PC-3 (cell line): ENCODE measurements at regions of chrX and their contacts with region 1.

Region 1: DNA sequence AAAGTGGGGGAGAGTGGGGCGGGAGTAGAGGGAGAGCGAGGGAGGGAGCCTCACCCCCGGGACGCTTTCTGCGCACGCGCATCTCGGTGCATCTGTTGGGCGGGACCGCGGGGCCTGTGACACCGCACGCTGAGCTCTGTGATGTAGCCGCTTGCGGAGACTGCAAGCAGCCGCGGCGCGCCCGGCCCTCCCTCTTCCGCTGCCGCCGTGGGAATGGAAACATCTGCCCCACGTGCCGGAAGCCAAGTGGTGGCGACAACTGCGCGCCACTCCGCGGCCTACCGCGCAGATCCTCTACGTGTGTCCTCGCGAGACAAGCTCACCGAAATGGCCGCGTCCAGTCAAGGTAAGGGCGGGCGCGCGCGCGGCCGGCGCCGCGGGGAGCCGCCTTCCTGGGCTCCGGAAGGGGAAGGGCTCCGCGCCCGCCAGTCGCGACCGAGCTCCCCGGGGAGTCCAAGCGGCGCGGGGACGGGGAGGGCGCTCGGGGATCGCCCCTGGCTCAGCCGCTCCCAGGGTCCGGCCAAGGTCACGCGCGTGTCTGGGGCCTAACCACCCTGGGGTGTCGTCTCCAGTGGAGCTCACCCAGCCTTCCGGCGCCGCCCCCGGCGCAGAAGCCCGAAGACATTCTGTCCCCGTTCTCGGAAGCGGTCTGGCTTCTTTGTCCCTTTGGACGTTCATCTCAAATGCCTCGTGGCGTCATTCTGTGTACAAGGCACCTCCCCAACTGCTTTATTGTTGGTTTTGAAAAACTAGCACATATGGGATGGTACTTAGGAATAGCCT is at the start of gene FUNDC2:
- DNase-seq: peak; percentile 92
- ATAC-seq: peak; percentile 77
- H3K4me3 ChIP-seq: peak within 1 kb of the TSS; percentile 77
- H3K27ac ChIP-seq: peak within 1 kb of the TSS; percentile 90
- H3K4me1 ChIP-seq: peaks cover 13% of the 10 kb centered on the region
- H3K27me3 ChIP-seq: no peaks in the 10 kb centered on the region
- CTCF ChIP-seq: no peak
- total RNA-seq, gene FUNDC2: 75.0 and 80.7 TPM in 2 replicates

Region 2: GRCh38 chrX:154986826-154987576 is 39.9 kb before region 1 on chrX:
- CTCF ChIA-PET with region 1: no interaction called
- POLR2A ChIA-PET with region 1: no interaction called
- intact Hi-C with region 1: loop called (anchors 2 kb)
- DNase-seq: peak; percentile 19
- ATAC-seq: no peak
- H3K4me3 ChIP-seq: no peak overlapping the region
- H3K27ac ChIP-seq: no peak overlapping the region
- H3K4me1 ChIP-seq: no peaks in the 10 kb centered on the region
- H3K27me3 ChIP-seq: no peaks in the 10 kb centered on the region
- CTCF ChIP-seq: peak; percentile 36; the same call in 1 of the 2 replicates

Region 3: DNA sequence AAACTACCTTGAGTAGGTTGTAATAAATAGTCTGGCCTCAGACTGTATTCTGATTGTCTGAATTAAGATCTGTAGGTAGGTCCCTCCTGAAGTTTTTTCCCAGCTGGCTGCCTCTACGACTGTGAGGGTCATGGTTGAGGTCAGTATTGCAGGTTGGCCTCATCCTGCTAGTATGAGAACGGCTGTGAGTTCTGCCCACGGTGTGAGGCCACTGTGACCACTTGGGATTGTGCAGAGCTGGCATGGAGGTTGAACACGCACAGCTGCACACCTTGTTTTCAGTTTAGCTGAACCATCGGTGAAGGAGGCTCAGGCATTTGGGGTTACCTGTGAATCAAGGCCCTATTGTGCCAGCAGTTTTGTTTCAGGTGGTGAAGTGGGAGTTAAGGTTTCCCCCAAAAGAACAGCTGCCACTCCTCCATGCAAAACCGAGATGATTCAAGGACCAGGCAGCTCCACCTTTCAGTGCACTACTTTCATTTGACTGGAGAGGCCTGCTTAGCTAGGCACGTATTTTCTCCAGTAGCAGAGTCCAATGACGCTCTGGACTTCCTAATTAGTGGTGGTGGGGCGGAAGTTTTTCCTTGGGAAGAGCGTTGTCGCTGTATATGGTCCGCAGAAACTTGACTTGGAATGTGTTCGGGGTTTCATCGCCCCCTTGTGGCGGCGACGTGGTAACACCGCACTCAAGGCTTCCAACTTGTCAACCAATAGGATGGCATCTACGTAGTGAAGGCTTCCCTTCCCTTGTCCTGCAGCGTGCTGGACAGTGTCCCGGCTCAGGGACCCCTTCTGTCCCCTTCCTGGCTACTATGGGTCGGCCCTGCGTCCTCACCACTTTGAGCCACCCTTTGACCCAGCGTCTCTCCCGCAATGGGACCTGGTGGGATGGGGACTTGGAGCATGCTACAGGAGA is 30.2 kb after region 1 on chrX:
- CTCF ChIA-PET with region 1: interaction called, 3 read pairs
- POLR2A ChIA-PET with region 1: no interaction called
- intact Hi-C with region 1: loop called (anchors 1 kb)
- DNase-seq: peak; percentile 73
- ATAC-seq: peak; percentile 82
- H3K4me3 ChIP-seq: no peak overlapping the region
- H3K27ac ChIP-seq: no peak overlapping the region
- H3K4me1 ChIP-seq: no peaks in the 10 kb centered on the region
- H3K27me3 ChIP-seq: no peaks in the 10 kb centered on the region
- CTCF ChIP-seq: peak; percentile 81

Region 4: DNA sequence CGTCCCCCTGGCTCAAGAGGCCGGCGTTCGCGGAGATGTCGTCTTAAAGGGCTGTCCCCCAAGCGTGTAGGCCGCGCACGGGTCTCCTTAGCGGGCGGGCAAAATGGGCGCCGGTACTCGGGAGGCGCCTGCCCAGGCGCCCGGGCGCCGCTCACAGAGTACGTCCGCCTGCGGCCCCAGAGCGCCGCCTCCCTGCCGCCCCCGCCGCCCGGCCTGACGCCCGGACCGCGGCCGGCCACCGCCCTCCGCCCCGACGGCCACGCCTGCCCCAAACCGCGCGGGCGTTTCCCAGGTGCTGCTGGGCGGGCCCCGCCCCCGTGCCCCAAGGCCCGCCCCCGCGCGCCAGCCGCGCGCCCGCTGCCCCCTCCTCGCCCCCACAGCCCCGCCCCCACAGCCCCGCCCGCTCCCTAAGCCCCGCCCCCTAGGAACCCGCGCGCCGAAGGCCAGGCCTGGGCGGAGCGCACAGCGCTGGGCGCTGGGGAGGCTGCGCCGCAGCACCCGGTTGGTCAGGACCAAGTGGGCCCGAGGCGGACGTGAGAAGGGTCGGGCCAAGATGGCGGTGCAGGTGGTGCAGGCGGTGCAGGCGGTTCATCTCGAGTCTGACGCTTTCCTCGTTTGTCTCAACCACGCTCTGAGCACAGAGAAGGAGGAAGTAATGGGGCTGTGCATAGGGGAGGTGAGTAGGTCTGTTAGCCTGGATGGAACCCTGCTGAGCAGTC is 44.2 kb after region 1 on chrX and contains the starts of genes BRCC3, CMC4 and MTCP1:
- CTCF ChIA-PET with region 1: no interaction called
- POLR2A ChIA-PET with region 1: no interaction called
- intact Hi-C with region 1: loop called (anchors 1 kb)
- DNase-seq: peak; percentile 85
- ATAC-seq: peak; percentile 87
- H3K4me3 ChIP-seq: peak within 1 kb of the TSS; percentile 98
- H3K27ac ChIP-seq: peak within 1 kb of the TSS; percentile 44
- H3K4me1 ChIP-seq: peaks cover 47% of the 10 kb centered on the region
- H3K27me3 ChIP-seq: no peaks in the 10 kb centered on the region
- CTCF ChIP-seq: no peak
- total RNA-seq, gene BRCC3: 18.0 and 19.7 TPM in 2 replicates
- total RNA-seq, gene CMC4: 20.7 and 31.9 TPM in 2 replicates
- total RNA-seq, gene MTCP1: 6.6 and 17.9 TPM in 2 replicates